Aorta (tissue), 5 donors: ENCODE measurements at regions of chrX and their contacts with region 1.

Region 1: GRCh38 chrX:75522565-75523431 is at the start of gene ZDHHC15:
- DNase-seq: peak; percentile 75 to 88
- ATAC-seq: peak; percentile 90
- H3K4me3 ChIP-seq: peak within 1 kb of the TSS; percentile 55 to 82
- H3K27ac ChIP-seq: peak within 1 kb of the TSS; percentile 14 to 75
- H3K4me1 ChIP-seq: no peaks in the 10 kb centered on the region
- H3K27me3 ChIP-seq: no peaks in the 10 kb centered on the region
- total RNA-seq, gene ZDHHC15: 3.1 to 4.8 TPM

Region 2: DNA sequence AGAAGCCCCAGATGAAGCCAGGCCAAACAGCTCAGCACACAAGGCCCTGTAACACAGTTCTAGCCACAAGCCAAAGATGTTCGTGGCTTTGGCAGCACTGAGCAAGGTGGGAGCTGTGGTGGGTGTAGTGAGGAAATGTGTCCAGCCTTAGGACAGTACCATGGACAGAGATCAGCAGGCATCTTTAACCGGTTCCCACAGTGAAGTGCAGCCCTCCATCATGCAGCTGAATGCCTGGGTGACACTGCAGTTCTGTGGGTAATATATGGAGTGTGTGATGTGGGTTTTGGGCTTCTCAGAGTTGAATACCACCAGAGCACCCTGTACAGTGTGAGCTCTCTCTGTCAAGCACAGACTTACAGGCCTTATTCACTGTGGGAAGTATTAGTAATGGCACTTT is 591.6 kb before region 1 on chrX:
- intact Hi-C with region 1: no loop called
- DNase-seq: no peak
- ATAC-seq: no peak
- H3K4me3 ChIP-seq: no peak overlapping the region
- H3K27ac ChIP-seq: no peak overlapping the region
- H3K4me1 ChIP-seq: peaks cover 0 to 1% of the 10 kb centered on the region in 2 donors
- H3K27me3 ChIP-seq: no peaks in the 10 kb centered on the region

Region 3: DNA sequence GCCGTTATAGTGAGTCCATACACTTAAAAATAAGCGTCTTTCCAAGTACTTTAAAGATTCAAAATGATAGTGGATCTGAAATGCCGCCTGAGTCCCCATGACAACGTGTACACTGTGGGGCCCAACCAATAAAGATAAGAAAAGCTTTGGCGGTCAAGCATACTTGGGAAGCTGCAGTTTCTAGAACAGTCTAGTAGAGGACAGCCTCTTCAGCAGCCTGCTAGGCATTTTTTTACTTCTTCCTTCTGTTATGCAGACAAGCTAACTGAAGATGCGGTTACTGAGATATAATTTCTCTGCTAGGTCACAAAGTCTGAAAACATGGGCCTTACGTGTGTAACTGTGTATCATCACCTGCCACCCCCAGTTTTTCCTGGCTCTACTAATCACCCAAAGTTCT is 249.3 kb before region 1 on chrX:
- intact Hi-C with region 1: loop called in 1 of 2 experiments (anchors 10 kb)
- DNase-seq: no peak
- ATAC-seq: peak; percentile 47
- H3K4me3 ChIP-seq: peak overlapping the region; percentile 23 to 72
- H3K27ac ChIP-seq: peak overlapping the region in 1 of 2 donors; percentile 76
- H3K4me1 ChIP-seq: no peaks in the 10 kb centered on the region
- H3K27me3 ChIP-seq: no peaks in the 10 kb centered on the region

Region 4: GRCh38 chrX:75390470-75390869 is 132.3 kb before region 1 on chrX:
- intact Hi-C with region 1: no loop called
- DNase-seq: no peak
- ATAC-seq: no peak
- H3K4me3 ChIP-seq: no peak overlapping the region
- H3K27ac ChIP-seq: no peak overlapping the region
- H3K4me1 ChIP-seq: no peaks in the 10 kb centered on the region
- H3K27me3 ChIP-seq: no peaks in the 10 kb centered on the region